ENCODE measurements at regions of chr6 and their contacts with region 1.

Region 1: DNA sequence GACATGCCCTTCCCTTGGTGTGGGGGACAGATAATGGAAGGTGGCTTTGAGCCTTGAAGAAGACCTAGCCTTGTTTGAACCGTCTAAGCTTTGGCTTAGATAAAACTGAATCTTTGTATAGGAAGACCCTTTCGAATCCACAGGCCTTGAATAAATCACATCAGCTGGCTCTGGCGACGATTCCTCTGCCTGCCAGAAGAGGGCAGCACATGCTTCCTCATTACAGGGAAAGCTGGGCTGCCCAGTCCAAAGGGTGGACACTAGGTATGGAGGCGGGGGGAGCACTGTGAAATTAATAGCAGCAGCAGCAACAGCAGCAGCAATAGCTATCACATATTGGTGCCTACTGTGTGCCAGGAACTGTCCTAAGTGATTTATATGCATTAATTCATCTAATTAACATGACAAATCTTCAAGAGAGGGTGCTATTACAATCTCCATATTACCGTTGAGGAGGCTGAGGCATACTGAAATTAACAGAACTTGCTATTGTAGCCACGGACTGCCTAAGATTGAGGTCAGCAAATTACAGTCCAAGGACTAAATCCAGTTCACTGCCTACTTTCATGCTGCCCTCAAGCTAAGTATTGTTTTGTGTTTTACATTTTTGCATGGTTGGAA is 85.1 kb downstream of the CLIC5 start:
- DNase-seq: peak; percentile 16 to 73 (median 47)
- ATAC-seq: no peak
- H3K4me3 ChIP-seq: no peak overlapping the region
- H3K4me3 Mint-ChIP-seq: no peak overlapping the region
- H3K27ac ChIP-seq: no peak overlapping the region
- H3K27ac Mint-ChIP-seq: no peak overlapping the region
- H3K4me1 ChIP-seq: no peaks in the 10 kb centered on the region
- H3K4me1 Mint-ChIP-seq: no peaks in the 10 kb centered on the region
- H3K27me3 ChIP-seq: no peaks in the 10 kb centered on the region
- H3K27me3 Mint-ChIP-seq: no peaks in the 10 kb centered on the region
- CTCF ChIP-seq: peak; percentile 99

Region 2: DNA sequence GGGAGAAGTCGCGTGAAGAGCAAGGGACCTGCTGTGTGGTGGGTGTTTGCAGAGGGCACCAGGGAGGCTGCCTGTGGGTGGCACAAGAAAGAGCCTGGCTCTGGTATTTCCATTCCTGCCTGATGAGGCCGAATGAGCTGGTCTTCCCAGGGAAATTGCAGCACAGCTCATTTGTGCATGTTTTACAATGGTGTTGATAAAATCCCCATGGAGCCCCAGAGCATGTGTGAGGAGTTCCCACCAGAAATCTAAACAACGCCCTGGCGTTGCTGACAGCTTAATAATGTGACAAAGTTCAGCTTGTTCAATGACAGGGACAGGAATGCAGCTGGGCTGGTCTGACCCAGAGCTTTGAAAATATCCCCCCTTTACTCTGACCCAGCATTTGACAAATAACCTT is 50.4 kb before region 1 on chr6:
- CTCF ChIA-PET with region 1: no interaction called
- POLR2A ChIA-PET with region 1: no interaction called
- intact Hi-C with region 1: no loop called
- DNase-seq: no peak
- ATAC-seq: no peak
- H3K4me3 ChIP-seq: no peak overlapping the region
- H3K4me3 Mint-ChIP-seq: no peak overlapping the region
- H3K27ac ChIP-seq: no peak overlapping the region
- H3K27ac Mint-ChIP-seq: no peak overlapping the region
- H3K4me1 ChIP-seq: no peaks in the 10 kb centered on the region
- H3K4me1 Mint-ChIP-seq: no peaks in the 10 kb centered on the region
- H3K27me3 ChIP-seq: no peaks in the 10 kb centered on the region
- H3K27me3 Mint-ChIP-seq: peaks cover 4% of the 10 kb centered on the region
- CTCF ChIP-seq: no peak

Region 3: DNA sequence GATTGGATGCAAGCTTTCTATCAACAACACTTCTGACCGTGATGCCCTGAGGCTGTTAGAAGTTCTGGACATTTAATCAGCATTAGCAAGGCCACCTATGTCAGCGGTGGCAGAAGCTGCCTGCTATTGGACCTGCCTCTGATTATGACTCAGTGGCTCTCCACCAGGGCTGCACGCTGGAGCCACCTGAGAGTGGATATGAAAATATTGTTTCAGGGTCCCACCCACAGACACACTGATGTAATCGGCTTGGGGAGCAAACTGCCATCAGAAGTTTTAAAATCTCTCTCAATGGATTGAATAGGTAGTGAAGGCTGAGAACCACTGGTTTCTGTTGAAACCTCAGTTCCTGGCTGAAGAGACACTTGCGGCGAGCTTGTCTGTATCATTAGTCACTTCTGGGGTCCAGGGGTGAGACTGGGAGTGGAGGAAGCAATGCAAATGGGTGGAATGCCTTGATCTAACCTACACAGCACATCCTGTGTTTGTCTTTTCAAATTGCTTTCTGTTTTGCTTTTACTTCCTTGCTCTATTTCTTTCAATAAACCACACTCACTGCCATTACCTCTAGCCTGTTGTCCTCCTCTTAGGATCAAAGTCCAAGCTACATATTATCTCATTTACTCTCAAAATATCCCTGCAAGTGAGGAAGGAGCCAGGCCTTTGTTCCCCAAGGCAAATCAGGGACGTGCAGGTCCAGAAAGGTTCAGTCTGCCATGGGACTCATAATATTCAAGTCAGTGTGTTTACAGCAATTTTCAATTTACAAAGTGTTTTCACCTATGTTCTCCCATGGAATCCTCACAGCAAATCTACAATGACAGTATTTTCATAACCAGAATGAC is 80.9 kb after region 1 on chr6:
- CTCF ChIA-PET with region 1: interaction called, 5 read pairs
- POLR2A ChIA-PET with region 1: no interaction called
- intact Hi-C with region 1: loop called (anchors 5 kb)
- DNase-seq: peak; percentile 16 to 91 (median 56)
- ATAC-seq: peak; percentile 85
- H3K4me3 ChIP-seq: peak overlapping the region; percentile 27
- H3K4me3 Mint-ChIP-seq: peak overlapping the region; percentile 62
- H3K27ac ChIP-seq: peak overlapping the region; percentile 26 to 76
- H3K27ac Mint-ChIP-seq: peak overlapping the region; percentile 91
- H3K4me1 ChIP-seq: peaks cover 45% of the 10 kb centered on the region
- H3K4me1 Mint-ChIP-seq: peaks cover 55% of the 10 kb centered on the region
- H3K27me3 ChIP-seq: no peaks in the 10 kb centered on the region
- H3K27me3 Mint-ChIP-seq: peaks cover 1% of the 10 kb centered on the region
- CTCF ChIP-seq: no peak

Region 4: GRCh38 chr6:46078294-46078693 is 147.8 kb after region 1 on chr6:
- CTCF ChIA-PET with region 1: interaction called, 3 read pairs
- POLR2A ChIA-PET with region 1: no interaction called
- intact Hi-C with region 1: loop called in 1 of 2 experiments (anchors 10 kb)
- DNase-seq: no peak
- ATAC-seq: no peak
- H3K4me3 ChIP-seq: no peak overlapping the region
- H3K4me3 Mint-ChIP-seq: no peak overlapping the region
- H3K27ac ChIP-seq: no peak overlapping the region
- H3K27ac Mint-ChIP-seq: no peak overlapping the region
- H3K4me1 ChIP-seq: no peaks in the 10 kb centered on the region
- H3K4me1 Mint-ChIP-seq: no peaks in the 10 kb centered on the region
- H3K27me3 ChIP-seq: no peaks in the 10 kb centered on the region
- H3K27me3 Mint-ChIP-seq: no peaks in the 10 kb centered on the region
- CTCF ChIP-seq: no peak

Region 5: DNA sequence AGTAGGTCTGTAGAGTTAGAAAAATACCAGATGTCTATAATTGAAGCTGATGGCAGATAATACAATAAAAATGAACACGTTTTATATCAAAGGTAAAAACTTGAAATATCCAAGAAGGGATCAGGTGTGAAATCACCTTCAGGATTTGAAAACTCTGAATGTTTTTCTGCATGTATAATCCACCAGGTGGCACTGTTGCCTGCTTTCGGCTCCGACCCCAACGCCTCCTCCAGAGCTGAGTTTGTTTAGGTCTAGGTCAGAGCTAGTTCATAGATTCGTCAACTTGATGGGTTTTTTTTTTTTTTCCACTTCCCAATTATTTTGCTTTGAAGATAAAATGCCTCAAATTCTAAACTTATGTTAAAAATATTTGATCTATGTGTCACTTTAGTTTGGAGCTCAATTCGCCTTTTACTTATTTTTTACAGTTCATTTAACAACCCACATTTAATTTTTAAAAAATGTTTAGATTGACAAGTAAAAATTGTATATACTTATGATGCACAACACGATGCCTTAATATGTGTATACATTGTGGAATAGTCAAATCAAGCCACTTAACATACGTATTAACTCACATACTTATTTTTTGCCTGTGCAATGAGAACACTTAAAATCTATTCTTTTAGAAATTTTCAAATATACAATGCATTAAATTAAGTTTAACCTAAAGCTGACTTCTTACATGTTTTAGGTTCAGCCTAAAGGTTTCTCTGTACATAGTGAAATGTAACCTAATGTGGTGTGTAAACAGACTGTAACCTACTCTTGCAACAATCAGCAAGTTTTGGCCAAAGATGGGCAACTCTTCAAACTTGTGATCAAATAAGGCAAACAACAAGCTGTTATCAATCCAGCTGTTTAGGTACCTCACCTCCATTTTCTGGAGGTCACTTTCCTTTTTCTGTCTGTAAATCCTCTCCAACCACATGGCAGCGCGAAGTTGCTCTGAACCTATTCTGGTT is 159.9 kb after region 1 on chr6:
- CTCF ChIA-PET with region 1: interaction called, 11 read pairs
- POLR2A ChIA-PET with region 1: interaction called, 4 read pairs
- intact Hi-C with region 1: no loop called
- DNase-seq: peak; percentile 17 to 77 (median 42)
- ATAC-seq: no peak
- H3K4me3 ChIP-seq: no peak overlapping the region
- H3K4me3 Mint-ChIP-seq: no peak overlapping the region
- H3K27ac ChIP-seq: no peak overlapping the region
- H3K27ac Mint-ChIP-seq: no peak overlapping the region
- H3K4me1 ChIP-seq: no peaks in the 10 kb centered on the region
- H3K4me1 Mint-ChIP-seq: no peaks in the 10 kb centered on the region
- H3K27me3 ChIP-seq: peaks cover 5 to 18% of the 10 kb centered on the region in 2 experiments
- H3K27me3 Mint-ChIP-seq: peaks cover 65% of the 10 kb centered on the region
- CTCF ChIP-seq: peak; percentile 90

Region 6: DNA sequence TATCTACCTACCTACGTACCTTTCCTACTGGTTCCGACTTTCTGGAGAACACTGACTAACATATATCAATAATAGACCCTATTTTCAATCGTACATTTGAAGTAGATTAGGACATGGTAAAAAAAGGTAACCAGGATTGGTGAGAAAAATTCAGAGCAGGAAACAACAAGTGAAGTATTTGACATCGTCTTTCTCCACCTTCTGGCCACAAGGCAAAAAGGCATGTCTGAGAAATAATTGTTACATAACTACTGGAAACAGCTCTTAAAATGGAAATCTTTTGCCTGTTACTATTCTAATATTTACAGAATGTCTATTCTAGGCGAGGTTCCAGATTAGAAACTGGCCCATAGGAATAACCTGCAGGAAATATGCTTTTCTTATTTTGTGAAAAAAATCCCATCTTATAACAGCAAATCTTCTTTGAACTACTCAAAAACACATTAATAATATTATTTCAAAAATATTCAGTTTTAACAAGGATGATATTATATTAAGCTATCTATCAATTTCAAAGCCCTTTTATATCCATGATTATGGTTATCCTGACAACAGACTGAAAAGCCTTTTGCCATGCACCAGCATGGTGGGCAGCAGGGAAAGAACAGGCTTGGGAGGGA is 479.9 kb after region 1 on chr6:
- CTCF ChIA-PET with region 1: interaction called, 6 read pairs
- POLR2A ChIA-PET with region 1: no interaction called
- intact Hi-C with region 1: loop called in 1 of 2 experiments (anchors 2 kb)
- DNase-seq: peak in 4 of 14 experiments; percentile 2 to 77 (median 66)
- ATAC-seq: no peak
- H3K4me3 ChIP-seq: no peak overlapping the region
- H3K4me3 Mint-ChIP-seq: no peak overlapping the region
- H3K27ac ChIP-seq: no peak overlapping the region
- H3K27ac Mint-ChIP-seq: no peak overlapping the region
- H3K4me1 ChIP-seq: no peaks in the 10 kb centered on the region
- H3K4me1 Mint-ChIP-seq: no peaks in the 10 kb centered on the region
- H3K27me3 ChIP-seq: no peaks in the 10 kb centered on the region
- H3K27me3 Mint-ChIP-seq: no peaks in the 10 kb centered on the region
- CTCF ChIP-seq: peak; percentile 60

Region 7: GRCh38 chr6:46626228-46626909 is 695.8 kb after region 1 on chr6:
- CTCF ChIA-PET with region 1: no interaction called
- POLR2A ChIA-PET with region 1: no interaction called
- intact Hi-C with region 1: loop called in 1 of 2 experiments (anchors 5 kb)
- DNase-seq: peak in 3 of 14 experiments; percentile 14 to 35 (median 32)
- ATAC-seq: no peak
- H3K4me3 ChIP-seq: no peak overlapping the region
- H3K4me3 Mint-ChIP-seq: peak overlapping the region; percentile 54
- H3K27ac ChIP-seq: no peak overlapping the region
- H3K27ac Mint-ChIP-seq: no peak overlapping the region
- H3K4me1 ChIP-seq: no peaks in the 10 kb centered on the region
- H3K4me1 Mint-ChIP-seq: peaks cover 5% of the 10 kb centered on the region
- H3K27me3 ChIP-seq: peaks cover 0 to 12% of the 10 kb centered on the region in 2 experiments
- H3K27me3 Mint-ChIP-seq: peaks cover 24% of the 10 kb centered on the region
- CTCF ChIP-seq: peak; percentile 65

Measured in CD4-positive, alpha-beta T cell (primary cell).